ENCODE measurements at regions of chr19 and their contacts with region 1.

Region 1: DNA sequence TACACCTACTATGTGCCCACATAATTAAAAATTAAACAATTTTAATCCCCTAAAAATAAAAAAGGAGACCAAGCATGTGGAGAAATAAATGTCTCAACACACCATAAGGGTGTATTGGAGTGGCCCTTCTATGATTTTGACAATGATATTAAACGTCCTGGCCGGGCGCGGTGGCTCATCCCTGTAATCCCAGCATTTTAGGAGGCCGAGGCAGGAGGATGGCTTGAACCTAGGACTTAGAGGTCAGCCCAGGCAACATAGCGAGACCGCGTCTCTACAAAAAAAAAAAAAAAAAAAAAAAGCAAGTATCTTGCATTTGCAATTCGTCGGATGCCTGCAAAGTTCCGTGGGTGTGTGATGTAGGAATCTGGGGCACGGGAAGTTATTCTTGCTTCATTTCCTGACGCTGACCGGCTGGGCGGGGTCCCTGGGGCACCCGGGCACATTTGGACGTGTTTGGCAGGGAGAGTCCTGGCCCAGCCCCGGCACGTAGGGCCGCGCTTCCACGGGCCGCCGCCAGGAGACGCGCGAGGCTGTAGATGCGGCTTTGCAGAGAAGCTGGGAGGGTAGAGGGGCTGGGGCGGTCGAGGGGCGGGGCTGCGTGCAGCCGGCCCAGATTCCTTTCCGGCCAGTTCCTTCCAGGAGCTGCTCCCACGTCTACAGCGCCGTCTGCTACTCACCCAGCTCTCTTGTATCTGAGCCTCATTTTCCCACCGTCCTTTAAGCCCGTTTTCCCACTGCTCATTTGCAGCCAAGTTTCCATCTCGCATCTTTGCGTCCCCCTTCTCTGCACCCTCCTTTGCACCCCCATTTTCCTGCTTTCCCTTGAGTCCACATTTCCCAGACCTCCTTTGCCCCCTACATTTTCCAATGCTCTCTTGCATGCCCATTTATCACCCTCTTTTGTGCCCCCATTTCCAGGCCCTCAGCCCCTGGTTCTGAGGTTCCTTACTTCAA is 2.2 kb upstream of the TSPAN16 start:
- DNase-seq: peak; percentile 90 to 96 (median 92)
- ATAC-seq: peak; percentile 99
- H3K4me3 ChIP-seq: 0 out of 2 replicates have a peak overlapping the region, but pooled peaks have one; percentile 6
- H3K27ac ChIP-seq: no peak overlapping the region
- H3K4me1 ChIP-seq: peaks cover 0 to 14% of the 10 kb centered on the region in 2 experiments; a peak in 3 of 5 replicates
- H3K27me3 ChIP-seq: peaks cover 10 to 29% of the 10 kb centered on the region in 2 experiments; a peak in 4 of 5 replicates
- CTCF ChIP-seq: peak; percentile 90 to 94 (median 93)
- EP300 ChIP-seq: no peak
- POLR2A ChIP-seq: no peak
- RAD21 ChIP-seq: peak; percentile 97 to 98

Region 2: GRCh38 chr19:11281356-11282049 is 12.2 kb before region 1 on chr19:
- CTCF ChIA-PET with region 1: no interaction called
- POLR2A ChIA-PET with region 1: no interaction called
- in situ Hi-C with region 1: no loop called
- intact Hi-C with region 1: no loop called
- DNase-seq: no peak
- ATAC-seq: no peak
- H3K4me3 ChIP-seq: no peak overlapping the region
- H3K27ac ChIP-seq: no peak overlapping the region
- H3K4me1 ChIP-seq: no peaks in the 10 kb centered on the region; a peak in 1 of 5 replicates
- H3K27me3 ChIP-seq: peaks cover 8 to 40% of the 10 kb centered on the region in 2 experiments; a peak in 4 of 5 replicates
- CTCF ChIP-seq: no peak
- EP300 ChIP-seq: no peak
- POLR2A ChIP-seq: no peak
- RAD21 ChIP-seq: no peak

Region 3: GRCh38 chr19:11374433-11375142 is 80.9 kb after region 1 on chr19 and contains the start of gene SWSAP1:
- CTCF ChIA-PET with region 1: no interaction called
- POLR2A ChIA-PET with region 1: interaction called, 6 read pairs
- in situ Hi-C with region 1: loop called (anchors 5 kb)
- intact Hi-C with region 1: no loop called
- DNase-seq: peak; percentile 95 to 100 (median 98)
- ATAC-seq: peak; percentile 97
- H3K4me3 ChIP-seq: peak within 1 kb of the TSS; percentile 59
- H3K27ac ChIP-seq: peak within 1 kb of the TSS; percentile 84
- H3K4me1 ChIP-seq: peaks cover 22 to 31% of the 10 kb centered on the region in 2 experiments
- H3K27me3 ChIP-seq: no peaks in the 10 kb centered on the region
- CTCF ChIP-seq: no peak
- EP300 ChIP-seq: no peak
- POLR2A ChIP-seq: peak; percentile 96
- RAD21 ChIP-seq: no peak; a peak in 1 of 4 replicates
- polyA plus RNA-seq, gene SWSAP1: 0.18 to 0.73 TPM

Region 4: GRCh38 chr19:11380653-11381534 is 87.2 kb after region 1 on chr19:
- CTCF ChIA-PET with region 1: no interaction called
- POLR2A ChIA-PET with region 1: no interaction called
- in situ Hi-C with region 1: loop called (anchors 5 kb)
- intact Hi-C with region 1: loop called (anchors 5 kb)
- DNase-seq: peak in 3 of 4 experiments; percentile 61 to 65 (median 61)
- ATAC-seq: no peak
- H3K4me3 ChIP-seq: no peak overlapping the region
- H3K27ac ChIP-seq: no peak overlapping the region
- H3K4me1 ChIP-seq: peaks cover 16 to 57% of the 10 kb centered on the region in 2 experiments
- H3K27me3 ChIP-seq: no peaks in the 10 kb centered on the region
- CTCF ChIP-seq: no peak
- EP300 ChIP-seq: no peak
- POLR2A ChIP-seq: no peak
- RAD21 ChIP-seq: no peak

Region 5: GRCh38 chr19:11435058-11435832 is 141.5 kb after region 1 on chr19 and contains the starts of genes ODAD3 and PRKCSH:
- CTCF ChIA-PET with region 1: interaction called, 11 read pairs
- POLR2A ChIA-PET with region 1: interaction called, 3 read pairs
- in situ Hi-C with region 1: loop called (anchors 5 kb)
- intact Hi-C with region 1: no loop called
- DNase-seq: peak; percentile 99
- ATAC-seq: peak; percentile 99
- H3K4me3 ChIP-seq: peak within 1 kb of the TSS; percentile 65
- H3K27ac ChIP-seq: peak within 1 kb of the TSS; percentile 63
- H3K4me1 ChIP-seq: peaks cover 11 to 22% of the 10 kb centered on the region in 2 experiments; a peak in 4 of 5 replicates
- H3K27me3 ChIP-seq: no peaks in the 10 kb centered on the region
- CTCF ChIP-seq: peak; percentile 73 to 96 (median 91)
- EP300 ChIP-seq: no peak; the same call in 1 of the 2 replicates
- POLR2A ChIP-seq: peak; percentile 83
- RAD21 ChIP-seq: peak in 1 of 2 experiments; percentile 4; a peak in 1 of 4 replicates
- polyA plus RNA-seq, gene ODAD3: 0.07 to 0.18 TPM
- polyA plus RNA-seq, gene PRKCSH: 2.3 to 6.9 TPM

Region 6: DNA sequence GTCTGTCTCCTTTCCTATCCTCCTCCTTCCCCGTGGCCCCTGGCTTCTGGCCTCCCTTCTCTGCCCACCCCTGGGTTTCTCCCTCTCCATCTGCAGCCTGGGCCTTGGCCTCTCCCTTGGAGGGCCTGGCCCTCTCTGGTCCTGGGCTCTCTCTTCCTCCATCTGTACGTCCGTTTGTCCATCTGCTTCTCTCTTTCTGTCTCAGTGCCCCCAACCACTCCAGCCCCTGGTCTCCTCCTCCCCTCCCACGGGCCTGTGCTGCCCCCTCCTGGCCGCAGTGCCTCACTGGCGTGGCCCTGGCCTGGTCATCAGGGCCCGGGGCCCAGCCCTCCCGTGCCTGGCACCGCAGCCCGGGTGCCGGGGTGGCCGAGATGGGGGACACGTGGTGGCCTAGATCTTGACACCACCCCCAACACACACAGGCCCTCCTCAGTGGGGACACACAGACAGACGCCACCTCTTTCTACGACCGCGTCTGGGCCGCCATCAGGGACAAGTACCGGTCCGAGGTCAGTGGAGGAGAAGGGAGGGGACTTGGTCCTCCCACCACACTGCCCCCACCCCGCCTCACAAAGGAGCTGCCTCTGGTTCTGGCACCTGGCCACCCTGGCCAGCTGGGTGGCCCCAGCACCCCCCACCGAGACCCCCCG is 153.1 kb after region 1 on chr19:
- CTCF ChIA-PET with region 1: interaction called, 24 read pairs
- POLR2A ChIA-PET with region 1: no interaction called
- in situ Hi-C with region 1: no loop called
- intact Hi-C with region 1: loop called (anchors 2 kb)
- DNase-seq: peak; percentile 69 to 86 (median 84)
- ATAC-seq: peak; percentile 96
- H3K4me3 ChIP-seq: no peak overlapping the region
- H3K27ac ChIP-seq: no peak overlapping the region
- H3K4me1 ChIP-seq: peaks cover 0 to 40% of the 10 kb centered on the region in 2 experiments; a peak in 2 of 5 replicates
- H3K27me3 ChIP-seq: no peaks in the 10 kb centered on the region
- CTCF ChIP-seq: peak; percentile 81 to 86 (median 86)
- EP300 ChIP-seq: no peak
- POLR2A ChIP-seq: no peak
- RAD21 ChIP-seq: peak; percentile 89

Region 7: GRCh38 chr19:11482384-11483050 is 188.8 kb after region 1 on chr19:
- CTCF ChIA-PET with region 1: interaction called, 15 read pairs
- POLR2A ChIA-PET with region 1: interaction called, 3 read pairs
- in situ Hi-C with region 1: no loop called
- intact Hi-C with region 1: loop called (anchors 10 kb)
- DNase-seq: peak; percentile 90 to 93 (median 92)
- ATAC-seq: peak; percentile 88
- H3K4me3 ChIP-seq: peak overlapping the region; percentile 39
- H3K27ac ChIP-seq: peak overlapping the region; percentile 40; the same call in 1 of the 3 replicates
- H3K4me1 ChIP-seq: peaks cover 9 to 70% of the 10 kb centered on the region in 2 experiments; a peak in 4 of 5 replicates
- H3K27me3 ChIP-seq: no peaks in the 10 kb centered on the region; a peak in 1 of 5 replicates
- CTCF ChIP-seq: peak; percentile 91 to 97 (median 95)
- EP300 ChIP-seq: peak; percentile 28; the same call in 1 of the 2 replicates
- POLR2A ChIP-seq: peak; percentile 55
- RAD21 ChIP-seq: peak; percentile 89 to 93

Region 8: DNA sequence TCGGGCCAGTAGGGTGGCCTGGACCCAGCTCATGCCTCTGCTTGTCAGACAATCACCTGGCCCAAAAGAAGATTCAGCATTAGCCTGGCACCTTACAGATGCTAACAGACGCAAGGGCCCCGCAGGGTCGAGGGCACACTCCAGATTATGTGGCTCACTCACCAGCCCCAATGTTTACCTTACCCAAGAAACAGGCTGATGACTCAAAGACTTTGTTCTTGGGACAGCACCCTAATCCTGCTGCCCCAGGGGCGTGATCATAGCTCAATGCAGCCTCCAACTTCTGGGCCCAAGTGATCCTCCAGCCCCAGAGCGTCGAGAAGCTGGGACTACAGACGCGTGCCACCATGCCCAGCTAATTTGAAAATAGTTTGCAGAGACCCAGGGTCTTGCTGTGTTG is 225.4 kb after region 1 on chr19:
- CTCF ChIA-PET with region 1: no interaction called
- POLR2A ChIA-PET with region 1: no interaction called
- in situ Hi-C with region 1: no loop called
- intact Hi-C with region 1: no loop called
- DNase-seq: no peak
- ATAC-seq: no peak
- H3K4me3 ChIP-seq: no peak overlapping the region
- H3K27ac ChIP-seq: no peak overlapping the region
- H3K4me1 ChIP-seq: peaks cover 0 to under 1% of the 10 kb centered on the region in 2 experiments; a peak in 1 of 5 replicates
- H3K27me3 ChIP-seq: no peaks in the 10 kb centered on the region
- CTCF ChIP-seq: no peak
- EP300 ChIP-seq: no peak
- POLR2A ChIP-seq: no peak
- RAD21 ChIP-seq: no peak

Measured in K562 (cell line).